BJ (cell line): ENCODE measurements at regions of chr10 and their contacts with region 1.

Region 1: GRCh38 chr10:101018600-101019439 is 12.1 kb downstream of the PDZD7 start:
- DNase-seq: no peak
- H3K4me3 ChIP-seq: no peak overlapping the region
- H3K27me3 ChIP-seq: no peaks in the 10 kb centered on the region; the same call in 1 of the 2 replicates
- CTCF ChIP-seq: peak; percentile 86

Region 2: DNA sequence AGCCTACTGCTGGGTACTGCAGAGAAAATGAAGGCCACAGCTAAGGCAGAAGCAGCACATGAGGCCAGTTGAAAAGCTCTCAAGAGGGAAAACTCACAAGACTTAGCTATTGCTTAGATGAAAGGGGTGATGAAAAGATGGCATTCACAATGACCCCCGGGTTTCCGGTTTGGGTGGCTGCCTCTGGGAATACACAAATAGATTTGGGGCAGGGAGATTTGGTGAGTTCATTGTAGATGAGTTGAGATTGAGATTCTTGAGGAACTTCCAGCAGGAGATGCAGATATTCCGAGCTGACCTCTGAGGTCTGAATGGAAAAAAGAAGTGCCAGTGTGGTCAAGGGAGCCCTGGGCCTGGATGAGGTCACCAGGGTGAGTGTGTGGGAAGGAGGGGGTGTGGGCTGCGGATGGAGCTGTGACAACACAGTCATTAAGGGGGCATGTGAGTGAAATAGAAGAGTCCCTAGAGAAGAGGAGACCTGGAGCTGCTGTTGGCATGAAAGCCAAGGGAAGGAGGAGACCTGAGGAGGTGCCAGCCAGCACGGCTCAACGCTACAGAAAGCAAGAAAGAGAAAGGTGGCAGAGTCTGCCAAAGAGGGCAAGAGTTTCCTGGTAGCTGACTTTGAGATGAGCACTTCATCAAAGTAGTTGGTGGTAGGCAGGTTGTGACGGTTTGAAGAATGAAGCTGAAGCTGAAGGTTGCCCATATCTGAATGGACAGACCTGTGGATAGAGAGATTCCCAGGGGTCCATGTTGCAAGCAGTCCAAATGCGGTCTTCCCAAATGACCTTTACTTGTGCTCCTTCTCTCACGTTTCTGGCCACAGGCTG is 439.3 kb before region 1 on chr10:
- CTCF ChIA-PET with region 1: no interaction called
- POLR2A ChIA-PET with region 1: no interaction called
- DNase-seq: no peak
- H3K4me3 ChIP-seq: no peak overlapping the region
- H3K27me3 ChIP-seq: peaks cover 11% of the 10 kb centered on the region
- CTCF ChIP-seq: no peak

Region 3: GRCh38 chr10:100962351-100963080 is 56.3 kb before region 1 on chr10:
- CTCF ChIA-PET with region 1: interaction called, 22 read pairs
- POLR2A ChIA-PET with region 1: interaction called, 30 read pairs
- DNase-seq: no peak
- H3K4me3 ChIP-seq: no peak overlapping the region
- H3K27me3 ChIP-seq: no peaks in the 10 kb centered on the region
- CTCF ChIP-seq: no peak

Region 4: GRCh38 chr10:101050208-101051069 is 31.6 kb after region 1 on chr10:
- CTCF ChIA-PET with region 1: interaction called, 17 read pairs
- POLR2A ChIA-PET with region 1: no interaction called
- DNase-seq: no peak
- H3K4me3 ChIP-seq: peak overlapping the region; percentile 18
- H3K27me3 ChIP-seq: peaks cover 12% of the 10 kb centered on the region
- CTCF ChIP-seq: peak; percentile 88

Region 5: DNA sequence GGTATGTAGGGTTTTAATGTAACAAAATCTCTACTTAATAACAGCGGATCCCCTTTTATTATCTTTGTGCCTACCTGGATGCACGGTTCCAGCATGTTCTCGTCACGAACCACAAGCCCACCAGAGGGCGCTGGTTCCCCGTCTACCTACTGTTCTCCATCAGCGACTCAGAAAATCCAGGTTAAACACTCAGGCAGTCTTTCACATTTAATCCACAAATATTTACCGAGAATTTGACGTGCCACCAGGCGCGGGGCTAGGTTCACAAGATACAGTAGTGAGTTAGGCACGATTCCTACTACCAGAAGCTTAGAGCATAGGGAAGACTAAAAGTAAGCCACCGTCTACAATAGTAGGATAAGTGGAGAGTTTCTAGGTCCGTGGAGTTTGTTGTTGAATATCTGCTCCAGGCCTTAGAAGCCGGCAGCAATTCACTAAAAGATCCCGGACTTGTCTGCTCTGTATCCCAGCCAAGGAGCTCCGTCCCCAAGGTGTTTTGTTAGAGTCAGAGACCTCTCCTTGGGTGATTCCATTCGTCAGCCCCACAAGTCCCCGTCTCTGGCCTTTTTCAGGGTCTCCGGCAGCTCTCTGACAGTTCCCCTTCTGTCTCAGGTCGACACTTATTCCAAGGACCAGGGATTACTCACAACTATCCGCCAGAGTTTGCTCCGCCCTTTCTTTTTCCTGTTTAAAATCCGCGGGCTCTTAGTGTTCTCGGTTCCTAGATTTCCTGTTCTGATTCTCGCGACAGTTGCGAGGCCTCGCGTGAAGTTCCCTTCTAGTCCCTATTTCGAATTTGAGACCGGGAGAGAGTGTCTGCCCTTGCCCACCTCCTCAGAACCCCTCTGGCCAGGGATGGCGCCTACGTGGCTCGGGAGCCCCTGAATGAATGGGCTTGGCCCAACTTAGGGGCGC is 41.5 kb after region 1 on chr10:
- CTCF ChIA-PET with region 1: interaction called, 81 read pairs
- POLR2A ChIA-PET with region 1: no interaction called
- DNase-seq: no peak
- H3K4me3 ChIP-seq: peak overlapping the region; percentile 86
- H3K27me3 ChIP-seq: no peaks in the 10 kb centered on the region
- CTCF ChIP-seq: peak; percentile 87

Region 6: GRCh38 chr10:101067356-101068083 is 48.7 kb after region 1 on chr10:
- CTCF ChIA-PET with region 1: interaction called, 81 read pairs
- POLR2A ChIA-PET with region 1: no interaction called
- DNase-seq: no peak
- H3K4me3 ChIP-seq: peak overlapping the region; percentile 50
- H3K27me3 ChIP-seq: peaks cover 2% of the 10 kb centered on the region
- CTCF ChIP-seq: peak; percentile 86

Region 7: GRCh38 chr10:101297901-101298486 is 279.2 kb after region 1 on chr10:
- CTCF ChIA-PET with region 1: no interaction called
- POLR2A ChIA-PET with region 1: no interaction called
- DNase-seq: no peak
- H3K4me3 ChIP-seq: no peak overlapping the region
- H3K27me3 ChIP-seq: peaks cover 28% of the 10 kb centered on the region
- CTCF ChIP-seq: peak; percentile 93